Aorta (tissue), 5 donors: ENCODE measurements at regions of chr3 and their contacts with region 1.

Region 1: DNA sequence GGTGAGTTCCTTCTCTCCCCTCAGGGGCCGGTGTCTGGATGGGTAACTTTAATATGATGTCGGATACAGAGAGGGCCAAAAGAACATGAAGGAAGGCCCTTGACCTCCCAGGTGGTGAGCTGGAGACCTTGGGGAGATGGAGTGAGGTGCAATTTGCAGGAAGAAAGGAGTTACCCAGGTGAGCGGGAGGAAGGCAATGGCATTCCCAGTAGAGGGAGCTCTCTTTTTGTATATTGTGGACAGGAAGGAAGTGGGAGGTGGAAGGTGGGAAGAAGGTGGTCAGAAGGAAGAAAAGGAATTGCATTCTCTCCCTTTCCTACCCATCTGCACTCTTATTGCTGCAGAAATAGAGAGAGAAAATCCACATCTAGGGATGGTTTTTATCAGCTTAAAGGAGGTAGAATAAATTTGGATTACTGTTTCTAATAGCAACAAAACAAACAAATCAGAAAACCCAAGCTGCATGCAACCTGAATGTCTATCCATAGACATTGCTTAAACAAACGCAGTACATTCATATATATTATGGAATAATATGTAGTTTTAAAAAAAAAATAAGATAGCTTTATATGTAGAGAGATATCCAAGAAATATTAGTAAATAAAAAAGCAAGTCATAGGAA is 169.0 kb upstream of the TSC22D2 start:
- DNase-seq: no peak
- ATAC-seq: no peak
- H3K4me3 ChIP-seq: no peak overlapping the region
- H3K27ac ChIP-seq: peak overlapping the region in 1 of 2 donors; percentile 34
- H3K4me1 ChIP-seq: peaks cover 0 to 15% of the 10 kb centered on the region in 2 donors
- H3K27me3 ChIP-seq: no peaks in the 10 kb centered on the region

Region 2: GRCh38 chr3:150146991-150147761 is 91.9 kb before region 1 on chr3:
- intact Hi-C with region 1: no loop called
- DNase-seq: peak; percentile 48 to 75
- ATAC-seq: no peak
- H3K4me3 ChIP-seq: peak overlapping the region in 1 of 2 donors; percentile 3
- H3K27ac ChIP-seq: peak overlapping the region; percentile 37 to 52
- H3K4me1 ChIP-seq: peaks cover 2% of the 10 kb centered on the region in 2 donors
- H3K27me3 ChIP-seq: no peaks in the 10 kb centered on the region

Region 3: DNA sequence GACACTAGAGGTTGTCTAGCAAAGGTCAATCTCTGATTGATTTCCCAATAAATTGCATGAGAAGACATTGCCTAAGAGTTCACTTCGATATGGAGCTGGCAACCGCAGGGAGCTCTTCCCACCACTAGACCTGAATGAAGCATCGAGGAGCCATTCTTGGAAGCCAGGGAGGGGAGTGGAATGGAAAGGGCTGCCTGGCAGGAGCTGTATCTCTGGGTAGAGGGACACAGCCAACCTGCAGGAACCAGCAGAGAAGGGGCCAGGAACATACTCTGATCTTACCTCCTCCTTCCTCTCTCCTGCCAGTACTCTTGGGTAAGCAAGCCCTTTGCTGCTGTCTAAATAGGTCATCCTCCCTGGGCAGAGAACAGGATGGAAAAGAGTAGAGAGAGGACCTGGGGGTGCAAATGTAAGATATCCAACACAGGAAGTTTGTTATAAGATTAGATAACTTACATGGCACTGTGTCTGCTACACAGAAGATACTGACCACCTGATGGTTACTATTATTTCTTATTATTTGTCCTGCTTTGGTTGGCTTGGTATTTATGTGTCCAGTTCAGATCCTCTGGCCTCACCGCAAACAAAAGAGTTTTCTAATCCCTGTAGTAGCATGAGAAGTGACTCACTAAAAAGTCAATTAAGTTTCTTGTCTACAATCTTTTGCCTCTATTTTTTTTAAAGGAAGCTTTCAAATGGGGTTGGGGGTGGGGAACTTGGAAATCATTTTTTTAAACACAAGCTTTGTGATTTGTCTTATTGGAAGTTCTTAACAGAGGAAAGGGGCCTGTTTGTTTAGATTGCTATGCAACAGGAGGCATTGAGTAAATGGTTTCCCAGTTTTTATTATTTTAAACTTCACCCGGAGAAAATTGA is 12.3 kb after region 1 on chr3:
- intact Hi-C with region 1: loop called in 1 of 2 experiments (anchors 2 kb)
- DNase-seq: no peak
- ATAC-seq: no peak
- H3K4me3 ChIP-seq: no peak overlapping the region
- H3K27ac ChIP-seq: peak overlapping the region; percentile 79 to 91
- H3K4me1 ChIP-seq: peaks cover 3 to 6% of the 10 kb centered on the region in 2 donors
- H3K27me3 ChIP-seq: no peaks in the 10 kb centered on the region

Region 4: DNA sequence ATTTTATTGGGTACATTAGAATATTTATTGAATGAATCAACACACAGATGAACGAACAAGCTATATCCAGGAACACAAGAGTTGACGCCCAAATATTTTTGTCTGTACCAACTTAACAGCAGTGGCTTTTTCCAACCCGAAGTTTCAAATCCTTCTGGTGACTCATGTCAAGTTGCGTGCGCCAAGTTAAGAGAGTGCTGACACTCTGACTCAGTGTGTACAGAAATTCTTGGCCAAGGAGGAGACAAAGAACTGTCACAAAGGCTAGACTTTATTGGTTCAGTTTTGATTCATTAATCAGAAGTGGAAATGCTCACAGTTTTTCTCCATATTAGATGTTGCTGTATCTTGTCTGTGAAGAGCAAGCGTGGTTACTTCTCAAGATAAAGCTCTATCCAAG is 109.4 kb after region 1 on chr3:
- intact Hi-C with region 1: loop called in 1 of 2 experiments (anchors 5 kb)
- DNase-seq: no peak
- ATAC-seq: peak; percentile 84
- H3K4me3 ChIP-seq: no peak overlapping the region
- H3K27ac ChIP-seq: peak overlapping the region; percentile 8 to 79
- H3K4me1 ChIP-seq: peaks cover 3 to 12% of the 10 kb centered on the region in 2 donors
- H3K27me3 ChIP-seq: no peaks in the 10 kb centered on the region